ENCODE measurements at regions of chr1 and their contacts with region 1.

Region 1: GRCh38 chr1:24391882-24392603 is 21.5 kb downstream of the STPG1 start:
- DNase-seq: no peak
- H3K4me3 ChIP-seq: no peak overlapping the region
- CTCF ChIP-seq: peak; percentile 78

Region 2: GRCh38 chr1:23436520-23437354 is 955.3 kb before region 1 on chr1:
- CTCF ChIA-PET with region 1: no interaction called
- POLR2A ChIA-PET with region 1: no interaction called
- DNase-seq: no peak
- H3K4me3 ChIP-seq: no peak overlapping the region
- CTCF ChIP-seq: no peak

Region 3: GRCh38 chr1:24186993-24187805 is 204.8 kb before region 1 on chr1 and contains the start of gene IFNLR1:
- CTCF ChIA-PET with region 1: interaction called, 37 read pairs
- POLR2A ChIA-PET with region 1: no interaction called
- DNase-seq: no peak
- H3K4me3 ChIP-seq: peak within 1 kb of the TSS; percentile 48
- CTCF ChIP-seq: no peak

Region 4: DNA sequence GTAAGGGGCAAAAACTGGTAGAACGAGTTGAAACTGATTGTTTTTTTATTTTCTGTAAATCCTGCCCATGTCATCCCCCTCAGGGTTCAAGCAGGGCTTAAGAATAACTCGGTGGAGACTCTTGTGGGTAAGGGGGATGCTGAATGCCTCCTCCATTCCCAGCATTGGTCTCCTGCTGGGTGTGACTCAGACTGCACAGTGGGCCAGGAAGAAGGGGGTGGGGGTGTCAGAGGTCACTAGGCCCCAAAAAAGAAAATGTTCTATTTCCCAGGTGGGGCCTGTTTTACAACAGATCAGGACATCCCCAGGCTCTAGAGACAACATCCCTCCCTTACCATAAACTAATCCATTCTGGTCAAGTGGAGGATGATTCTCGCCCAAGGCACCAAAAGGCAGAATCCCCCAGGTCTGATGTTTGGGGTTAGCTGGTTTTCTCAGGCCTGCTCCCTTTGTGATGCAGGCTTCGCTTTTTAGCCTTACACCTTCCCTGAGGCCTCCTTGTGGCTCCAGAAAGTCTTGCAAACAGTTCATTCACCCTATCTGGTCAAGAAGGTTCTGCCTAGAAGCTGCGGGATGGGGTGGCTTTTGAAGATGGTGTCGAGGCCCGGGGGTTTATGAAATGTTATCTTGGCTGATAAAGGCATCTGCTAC is 83.6 kb before region 1 on chr1:
- CTCF ChIA-PET with region 1: interaction called, 15 read pairs
- POLR2A ChIA-PET with region 1: no interaction called
- DNase-seq: no peak
- H3K4me3 ChIP-seq: no peak overlapping the region
- CTCF ChIP-seq: peak; percentile 51

Region 5: GRCh38 chr1:24364975-24365678 is 26.9 kb before region 1 on chr1:
- CTCF ChIA-PET with region 1: interaction called, 42 read pairs
- POLR2A ChIA-PET with region 1: no interaction called
- DNase-seq: no peak
- H3K4me3 ChIP-seq: no peak overlapping the region
- CTCF ChIP-seq: no peak

Region 6: DNA sequence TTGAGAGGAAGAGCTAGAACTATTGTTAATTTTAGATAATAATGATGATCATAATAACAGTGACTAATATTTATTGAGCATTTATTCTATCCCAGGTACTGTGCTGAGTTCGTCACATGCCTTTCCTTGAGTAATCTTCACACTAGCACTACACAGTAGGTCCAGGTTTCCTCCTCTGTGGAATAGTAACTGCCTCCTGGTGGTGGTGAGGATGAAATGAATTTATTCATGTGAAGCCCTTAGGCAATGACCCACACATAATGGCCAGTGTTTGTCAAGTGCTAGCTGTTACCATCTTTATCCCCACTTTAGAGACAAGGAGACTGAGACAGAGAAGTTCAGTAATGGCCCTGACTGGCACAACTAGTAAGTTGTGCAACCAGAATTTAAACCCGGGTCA is 29.5 kb after region 1 on chr1:
- CTCF ChIA-PET with region 1: interaction called, 66 read pairs
- POLR2A ChIA-PET with region 1: interaction called, 4 read pairs
- DNase-seq: no peak
- H3K4me3 ChIP-seq: no peak overlapping the region
- CTCF ChIP-seq: no peak

Region 7: GRCh38 chr1:24507405-24507804 is 115.4 kb after region 1 on chr1:
- CTCF ChIA-PET with region 1: no interaction called
- POLR2A ChIA-PET with region 1: no interaction called
- DNase-seq: no peak
- H3K4me3 ChIP-seq: no peak overlapping the region
- CTCF ChIP-seq: no peak

Region 8: DNA sequence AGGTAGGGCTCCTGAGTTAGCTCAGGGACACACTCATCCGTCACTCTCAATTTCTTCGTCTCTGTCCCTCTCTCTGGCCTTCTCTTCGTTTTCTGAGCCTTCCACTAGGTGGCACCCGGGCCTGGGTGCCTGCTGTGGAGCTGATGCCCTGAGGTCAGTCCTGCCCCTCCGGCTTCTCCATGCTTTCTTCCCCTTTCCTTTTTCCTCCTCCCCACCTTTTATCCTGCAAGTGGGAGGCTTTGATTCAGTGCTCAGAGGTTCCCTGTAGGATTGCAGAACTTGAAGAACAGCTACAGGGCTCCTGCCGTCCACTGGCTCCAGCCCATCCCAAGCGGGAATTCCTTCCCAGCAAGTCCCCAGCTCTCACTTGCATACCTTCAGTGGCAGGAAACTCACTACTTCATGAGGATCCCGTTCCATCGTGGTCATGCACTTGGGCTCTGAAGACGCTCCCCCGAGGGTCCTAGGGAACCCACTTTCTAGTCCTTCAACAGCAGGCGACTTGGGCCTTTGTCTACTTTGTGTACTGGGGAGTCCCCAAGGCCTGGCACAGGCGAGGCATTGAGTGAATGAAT is 296.7 kb after region 1 on chr1:
- CTCF ChIA-PET with region 1: no interaction called
- POLR2A ChIA-PET with region 1: no interaction called
- DNase-seq: no peak
- H3K4me3 ChIP-seq: no peak overlapping the region
- CTCF ChIP-seq: peak; percentile 89

Region 9: GRCh38 chr1:24914226-24915069 is 522.4 kb after region 1 on chr1:
- CTCF ChIA-PET with region 1: no interaction called
- POLR2A ChIA-PET with region 1: no interaction called
- DNase-seq: no peak
- H3K4me3 ChIP-seq: no peak overlapping the region
- CTCF ChIP-seq: no peak

Measured in AG04449 (cell line).